Dendritic cell treated with granulocyte-macrophage colony-stimulating factor and Interleukin-4, amounts not matched to agents 40 ng/mL and 50 ng/mL, for 4 days (primary cell): ENCODE measurements at regions of chr10 and their contacts with region 1.

Region 1: GRCh38 chr10:92432596-92432995 is 141.3 kb downstream of the IDE start:
- H3K4me3 Mint-ChIP-seq: no peak overlapping the region
- H3K27ac Mint-ChIP-seq: no peak overlapping the region
- H3K4me1 Mint-ChIP-seq: peaks cover 19% of the 10 kb centered on the region
- H3K27me3 Mint-ChIP-seq: peaks cover 2% of the 10 kb centered on the region

Region 2: GRCh38 chr10:92087750-92088395 is 344.7 kb before region 1 on chr10:
- intact Hi-C with region 1: loop called (anchors 1 kb)
- H3K4me3 Mint-ChIP-seq: no peak overlapping the region
- H3K27ac Mint-ChIP-seq: no peak overlapping the region
- H3K4me1 Mint-ChIP-seq: peaks cover 11% of the 10 kb centered on the region
- H3K27me3 Mint-ChIP-seq: no peaks in the 10 kb centered on the region